Mammary epithelial cell (primary cell): ENCODE measurements at regions of chr15 and their contacts with region 1.

Region 1: DNA sequence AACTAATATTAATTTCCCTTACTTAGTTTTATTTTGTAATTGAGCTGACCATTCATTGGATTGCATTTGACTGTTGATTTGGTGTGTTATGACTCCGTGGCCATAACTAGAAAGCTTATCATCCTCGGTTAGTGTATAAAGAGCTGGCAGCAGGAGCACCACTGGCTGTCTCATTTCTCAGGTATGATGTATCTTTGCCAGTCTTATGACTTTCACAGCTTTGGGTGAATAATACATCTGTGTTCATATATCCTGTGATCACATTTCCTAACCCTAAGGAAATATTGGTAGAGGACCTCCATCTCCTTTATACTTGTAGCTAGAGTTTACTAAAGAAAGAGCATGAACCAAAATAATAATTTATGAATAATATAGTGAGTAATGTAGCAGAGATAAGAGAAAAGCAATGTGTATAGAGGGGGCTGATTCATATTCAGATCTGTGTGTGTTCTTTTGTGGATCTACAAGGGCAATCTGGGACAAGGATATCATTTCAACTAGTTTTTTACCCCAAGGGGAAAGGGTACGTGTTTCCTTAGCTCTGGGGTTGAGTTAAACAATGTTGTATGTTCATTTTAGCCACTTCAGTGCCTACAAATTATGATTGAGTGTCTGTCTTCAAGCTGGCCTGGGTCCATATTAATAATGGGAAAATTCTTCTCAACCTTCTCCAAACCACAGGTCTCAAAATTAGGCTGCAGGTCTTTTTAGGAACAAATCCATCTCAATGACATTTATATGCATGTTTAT is 901.7 kb downstream of the NTRK3 start:
- DNase-seq: peak; percentile 91
- H3K4me3 ChIP-seq: no peak overlapping the region
- H3K27ac ChIP-seq: peak overlapping the region; percentile 90
- H3K4me1 ChIP-seq: peaks cover 14% of the 10 kb centered on the region
- H3K27me3 ChIP-seq: no peaks in the 10 kb centered on the region
- CTCF ChIP-seq: no peak

Region 2: DNA sequence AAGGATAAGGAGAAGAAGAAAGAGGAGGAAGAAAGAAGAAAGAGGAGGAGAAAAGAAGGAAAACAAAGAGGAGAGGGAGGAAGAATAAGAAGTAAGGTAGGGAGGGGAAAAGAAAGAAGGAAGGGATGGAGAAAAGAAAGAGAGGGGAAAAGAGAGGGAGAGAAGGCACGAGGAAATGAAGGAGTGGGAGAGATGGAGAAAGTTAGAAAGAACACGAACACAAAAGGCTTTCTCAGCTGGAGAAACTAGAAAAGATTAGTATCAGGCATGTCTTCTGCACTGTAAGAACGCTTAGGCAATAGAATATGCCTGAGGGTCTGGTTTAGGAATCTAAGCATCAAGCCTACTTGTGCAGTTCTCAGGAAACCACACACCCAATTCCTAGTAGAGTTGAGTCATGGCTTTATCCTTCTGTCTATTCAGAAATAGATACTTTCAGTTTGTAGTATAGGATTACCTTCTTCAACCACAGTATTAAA is 67.8 kb before region 1 on chr15:
- CTCF ChIA-PET with region 1: no interaction called
- dilution Hi-C with region 1: no loop called
- in situ Hi-C with region 1: no loop called
- intact Hi-C with region 1: loop called (anchors 5 kb)
- DNase-seq: peak; percentile 95
- H3K4me3 ChIP-seq: no peak overlapping the region
- H3K27ac ChIP-seq: peak overlapping the region; percentile 85
- H3K4me1 ChIP-seq: peaks cover 8% of the 10 kb centered on the region
- H3K27me3 ChIP-seq: no peaks in the 10 kb centered on the region
- CTCF ChIP-seq: no peak

Region 3: GRCh38 chr15:87394676-87395075 is 39.8 kb after region 1 on chr15:
- CTCF ChIA-PET with region 1: no interaction called
- dilution Hi-C with region 1: no loop called
- in situ Hi-C with region 1: no loop called
- intact Hi-C with region 1: no loop called
- DNase-seq: peak; percentile 56
- H3K4me3 ChIP-seq: no peak overlapping the region
- H3K27ac ChIP-seq: no peak overlapping the region
- H3K4me1 ChIP-seq: peaks cover 8% of the 10 kb centered on the region
- H3K27me3 ChIP-seq: no peaks in the 10 kb centered on the region
- CTCF ChIP-seq: no peak

Region 4: GRCh38 chr15:87470980-87471379 is 116.1 kb after region 1 on chr15:
- CTCF ChIA-PET with region 1: no interaction called
- dilution Hi-C with region 1: no loop called
- in situ Hi-C with region 1: no loop called
- intact Hi-C with region 1: no loop called
- DNase-seq: no peak
- H3K4me3 ChIP-seq: no peak overlapping the region
- H3K27ac ChIP-seq: no peak overlapping the region
- H3K4me1 ChIP-seq: no peaks in the 10 kb centered on the region
- H3K27me3 ChIP-seq: no peaks in the 10 kb centered on the region
- CTCF ChIP-seq: no peak

Region 5: DNA sequence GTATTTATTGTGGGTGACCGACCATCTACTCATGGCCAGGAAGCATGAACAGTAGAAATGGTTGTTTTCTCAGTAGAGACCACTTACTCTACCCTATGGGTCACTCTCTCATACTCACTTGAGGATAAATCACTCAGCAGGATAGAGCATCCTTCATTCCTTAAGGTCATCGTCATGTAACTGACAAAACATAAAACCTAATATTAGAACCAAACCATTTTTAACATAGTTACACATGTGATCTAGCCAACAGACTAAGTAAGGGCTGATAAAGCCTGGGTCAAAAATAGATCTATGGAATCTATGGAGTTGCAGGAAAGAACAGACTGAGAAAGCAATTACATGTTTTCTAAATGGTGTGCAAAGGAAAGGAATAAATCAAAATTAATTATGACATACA is 132.6 kb after region 1 on chr15:
- CTCF ChIA-PET with region 1: no interaction called
- dilution Hi-C with region 1: no loop called
- in situ Hi-C with region 1: no loop called
- intact Hi-C with region 1: no loop called
- DNase-seq: no peak
- H3K4me3 ChIP-seq: no peak overlapping the region
- H3K27ac ChIP-seq: no peak overlapping the region
- H3K4me1 ChIP-seq: no peaks in the 10 kb centered on the region
- H3K27me3 ChIP-seq: no peaks in the 10 kb centered on the region
- CTCF ChIP-seq: no peak